Sigmoid colon (tissue), 7 donors: ENCODE measurements at regions of chr19 and their contacts with region 1.

Region 1: DNA sequence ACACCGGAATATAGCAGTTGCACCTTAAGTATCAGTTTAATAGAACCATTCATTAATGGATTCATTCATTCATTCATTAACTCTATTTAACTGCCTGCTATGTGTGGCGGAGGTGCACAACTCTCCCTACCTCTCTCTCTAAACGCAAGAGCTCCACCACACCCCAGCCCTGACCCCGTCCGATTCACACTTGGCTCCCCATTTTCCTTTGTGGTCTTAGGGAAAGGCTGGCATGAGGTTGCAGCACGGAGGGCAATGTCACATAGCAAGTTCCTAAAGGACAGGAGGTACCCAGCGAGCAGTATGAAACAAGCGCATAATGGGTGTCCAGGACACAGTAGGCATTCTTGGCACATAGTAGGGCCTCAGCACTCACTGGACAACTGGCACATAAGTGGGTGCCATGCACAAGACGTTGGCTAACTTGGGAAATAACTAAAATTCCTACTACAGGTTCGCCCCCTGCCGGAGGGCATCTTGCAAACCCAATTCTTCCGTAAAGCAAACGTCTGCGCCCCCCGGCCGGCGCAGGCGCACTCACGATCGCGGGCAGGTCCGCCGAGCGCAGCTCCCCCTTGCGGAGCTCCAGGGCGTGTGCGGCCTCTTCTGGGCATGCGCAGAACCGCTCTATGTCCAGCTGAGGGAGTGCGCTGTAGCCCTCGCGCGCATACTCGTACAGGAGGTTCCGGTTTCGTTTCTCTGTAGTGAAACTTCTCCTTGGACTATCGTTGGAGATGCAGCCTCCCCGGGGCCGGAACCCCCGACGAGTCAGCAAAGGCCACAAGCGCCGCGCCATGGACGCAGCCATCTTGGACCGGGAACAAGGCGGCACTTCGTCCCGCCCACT is at the start of gene SARS2:
- DNase-seq: peak; percentile 96
- H3K4me3 ChIP-seq: peak within 1 kb of the TSS; percentile 59 to 73 (median 64)
- H3K27ac ChIP-seq: peak within 1 kb of the TSS; percentile 84 to 91 (median 89)
- H3K4me1 ChIP-seq: peaks cover 0 to 27% (median 21%) of the 10 kb centered on the region in 4 donors
- H3K27me3 ChIP-seq: no peaks in the 10 kb centered on the region
- CTCF ChIP-seq: peak; percentile 95 to 98 (median 98)
- EP300 ChIP-seq: no peak
- POLR2A ChIP-seq: no peak
- total RNA-seq, gene SARS2: 7.4 to 32.7 (median 12.2) TPM

Region 2: DNA sequence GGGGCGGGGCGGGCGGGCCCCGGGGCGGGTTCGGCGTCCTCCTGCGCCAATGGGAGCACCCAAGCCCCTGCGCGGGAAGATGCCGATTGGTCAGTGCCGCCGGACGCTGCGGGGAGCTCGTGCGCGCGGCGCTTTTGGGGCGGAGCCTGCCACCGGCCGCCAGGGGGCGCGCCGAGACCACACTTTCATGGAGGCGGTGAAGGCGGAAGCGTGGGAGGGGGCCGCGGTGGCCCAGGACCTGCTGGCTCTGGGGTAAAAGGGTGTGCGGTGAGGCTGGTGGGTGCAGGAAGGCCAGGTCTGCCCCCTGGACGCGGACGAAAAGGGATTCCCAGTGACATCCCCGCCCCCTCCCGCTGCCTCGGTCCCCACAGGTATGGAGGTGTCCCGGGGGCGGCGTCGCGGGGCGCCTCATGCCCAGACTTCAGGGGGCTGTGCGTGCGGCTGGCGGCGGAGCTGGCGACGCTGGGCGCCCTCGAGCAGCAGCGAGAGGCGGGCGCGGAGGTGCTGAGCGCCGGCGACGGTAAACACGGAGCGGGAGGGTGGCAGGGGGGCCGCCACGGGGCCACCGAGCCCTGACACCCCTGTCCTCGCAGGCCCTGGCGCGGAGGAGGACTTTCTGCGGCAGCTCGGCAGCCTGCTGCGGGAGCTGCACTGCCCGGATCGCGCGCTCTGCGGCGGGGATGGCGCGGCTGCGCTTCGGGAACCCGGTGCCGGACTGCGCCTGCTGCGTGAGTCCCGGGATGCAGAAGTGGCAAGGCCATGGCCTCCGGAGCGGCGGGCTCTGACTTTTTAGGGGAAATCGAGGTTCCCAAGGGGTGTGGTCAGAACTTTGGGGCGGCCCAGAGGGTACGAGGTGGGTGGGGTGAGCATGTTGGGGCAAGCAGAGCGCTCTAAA is 526.9 kb before region 1 on chr19 and contains the start of gene FAM98C:
- intact Hi-C with region 1: loop called (anchors 1 kb)
- DNase-seq: peak; percentile 98
- H3K4me3 ChIP-seq: peak within 1 kb of the TSS; percentile 64 to 98 (median 76)
- H3K27ac ChIP-seq: peak within 1 kb of the TSS; percentile 79 to 88 (median 84)
- H3K4me1 ChIP-seq: peaks cover 0 to 15% (median 7%) of the 10 kb centered on the region in 4 donors
- H3K27me3 ChIP-seq: peaks cover 12 to 30% (median 28%) of the 10 kb centered on the region in 3 donors
- CTCF ChIP-seq: peak; percentile 92 to 96 (median 94)
- EP300 ChIP-seq: no peak
- POLR2A ChIP-seq: no peak
- total RNA-seq, gene FAM98C: 17.2 to 27.2 (median 18.6) TPM

Region 3: GRCh38 chr19:38514812-38515633 is 415.1 kb before region 1 on chr19:
- intact Hi-C with region 1: loop called (anchors 2 kb)
- DNase-seq: peak; percentile 73
- H3K4me3 ChIP-seq: no peak overlapping the region
- H3K27ac ChIP-seq: no peak overlapping the region
- H3K4me1 ChIP-seq: peaks cover 0 to 6% (median 0%) of the 10 kb centered on the region in 4 donors
- H3K27me3 ChIP-seq: no peaks in the 10 kb centered on the region
- CTCF ChIP-seq: peak in 3 of 4 experiments; percentile 47 to 87 (median 50)
- EP300 ChIP-seq: no peak
- POLR2A ChIP-seq: no peak

Region 4: DNA sequence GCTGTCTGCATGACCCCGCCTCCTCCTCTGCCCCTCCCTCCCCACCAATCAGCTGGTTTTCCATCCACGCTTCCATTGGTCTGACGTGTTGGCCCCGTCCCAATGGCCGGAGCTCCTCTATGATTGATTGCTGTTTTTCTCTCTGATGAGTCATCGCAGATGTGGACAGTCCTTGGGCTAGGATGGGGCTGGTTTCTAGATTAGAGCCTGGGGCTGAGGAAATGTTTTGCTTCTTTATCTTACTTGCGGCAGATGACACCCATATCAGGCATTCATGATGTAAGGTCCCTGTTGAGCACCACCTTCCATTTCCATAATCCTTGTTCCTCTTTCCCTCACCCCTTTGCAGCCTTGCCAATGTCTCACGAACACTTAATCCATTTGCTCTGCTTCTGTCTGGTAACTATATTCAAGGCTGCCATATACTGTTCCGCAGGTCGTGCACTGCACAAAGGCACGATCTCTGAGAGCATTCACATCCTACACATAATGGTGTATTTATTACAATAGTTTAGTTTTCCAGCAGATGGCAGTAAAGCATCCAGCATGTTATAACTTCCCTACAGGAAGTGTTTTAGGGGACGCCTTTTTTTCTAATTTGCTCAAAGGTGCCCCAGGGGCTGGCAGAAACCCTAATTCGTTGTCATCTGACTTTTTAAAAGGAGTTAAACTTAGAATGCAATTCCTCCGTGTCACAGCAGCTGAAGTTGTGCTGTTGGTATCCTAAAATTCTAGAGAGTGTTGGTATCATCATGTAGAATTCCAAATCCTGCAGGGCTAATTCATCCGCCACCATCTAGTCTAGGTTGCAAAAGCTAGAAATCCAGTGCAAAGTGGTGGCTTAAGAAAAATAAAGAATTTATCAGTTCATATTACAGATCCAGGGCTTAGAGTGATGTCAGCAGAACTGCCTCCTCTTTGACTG is 385.9 kb before region 1 on chr19:
- intact Hi-C with region 1: loop called (anchors 2 kb)
- DNase-seq: peak; percentile 76
- H3K4me3 ChIP-seq: peak overlapping the region in 1 of 4 donors; percentile 36
- H3K27ac ChIP-seq: peak overlapping the region in 1 of 4 donors; percentile 57
- H3K4me1 ChIP-seq: peaks cover 0 to 16% (median 7%) of the 10 kb centered on the region in 4 donors
- H3K27me3 ChIP-seq: no peaks in the 10 kb centered on the region
- CTCF ChIP-seq: peak in 3 of 4 experiments; percentile 18 to 52 (median 45)
- EP300 ChIP-seq: no peak
- POLR2A ChIP-seq: no peak

Region 5: DNA sequence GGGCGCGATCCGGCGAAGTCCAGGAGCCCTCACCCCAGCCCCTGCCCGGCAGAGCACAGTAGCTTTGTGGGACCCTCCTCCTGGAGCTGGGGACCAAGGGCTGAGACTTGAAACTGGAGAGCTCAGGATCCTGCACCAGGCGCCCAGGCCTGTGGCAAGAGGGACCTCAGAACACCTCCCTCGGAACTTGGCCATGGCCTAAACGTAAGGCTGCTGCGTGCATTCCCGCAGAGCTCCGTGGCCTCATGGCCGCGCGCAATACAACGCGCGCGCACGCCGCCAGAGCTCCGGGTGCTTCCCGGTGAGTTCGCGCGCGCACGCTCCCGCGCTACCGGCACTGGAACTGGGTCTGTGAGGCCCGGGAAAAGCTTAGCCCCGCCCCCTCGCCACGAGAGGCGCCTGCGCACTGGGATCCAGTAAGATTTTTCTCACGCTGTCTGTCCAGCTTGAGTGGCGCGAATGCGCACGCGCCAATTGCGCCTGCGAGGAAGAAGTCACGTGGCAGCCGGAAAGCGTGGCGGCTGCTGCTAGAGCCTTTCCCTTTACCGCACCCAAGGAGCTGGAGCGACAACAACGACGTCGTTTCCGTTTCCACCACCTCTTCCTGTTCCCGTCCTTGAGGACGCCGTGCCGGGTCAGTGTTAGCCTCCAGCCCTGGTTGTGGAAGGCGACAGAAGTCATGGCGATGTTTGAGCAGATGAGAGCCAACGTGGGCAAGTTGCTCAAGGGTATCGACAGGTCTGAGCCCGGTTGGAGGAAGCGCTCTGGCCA is 311.4 kb before region 1 on chr19 and contains the start of gene EIF3K:
- intact Hi-C with region 1: loop called (anchors 5 kb)
- DNase-seq: peak; percentile 99
- H3K4me3 ChIP-seq: peak within 1 kb of the TSS; percentile 81 to 98 (median 84)
- H3K27ac ChIP-seq: peak within 1 kb of the TSS; percentile 85 to 94 (median 89)
- H3K4me1 ChIP-seq: peaks cover 0 to 24% (median 19%) of the 10 kb centered on the region in 4 donors
- H3K27me3 ChIP-seq: no peaks in the 10 kb centered on the region
- CTCF ChIP-seq: no peak
- EP300 ChIP-seq: peak in 1 of 4 donors; percentile 89
- POLR2A ChIP-seq: peak; percentile 69 to 76
- total RNA-seq, gene EIF3K: 469 to 803 (median 546) TPM

Region 6: DNA sequence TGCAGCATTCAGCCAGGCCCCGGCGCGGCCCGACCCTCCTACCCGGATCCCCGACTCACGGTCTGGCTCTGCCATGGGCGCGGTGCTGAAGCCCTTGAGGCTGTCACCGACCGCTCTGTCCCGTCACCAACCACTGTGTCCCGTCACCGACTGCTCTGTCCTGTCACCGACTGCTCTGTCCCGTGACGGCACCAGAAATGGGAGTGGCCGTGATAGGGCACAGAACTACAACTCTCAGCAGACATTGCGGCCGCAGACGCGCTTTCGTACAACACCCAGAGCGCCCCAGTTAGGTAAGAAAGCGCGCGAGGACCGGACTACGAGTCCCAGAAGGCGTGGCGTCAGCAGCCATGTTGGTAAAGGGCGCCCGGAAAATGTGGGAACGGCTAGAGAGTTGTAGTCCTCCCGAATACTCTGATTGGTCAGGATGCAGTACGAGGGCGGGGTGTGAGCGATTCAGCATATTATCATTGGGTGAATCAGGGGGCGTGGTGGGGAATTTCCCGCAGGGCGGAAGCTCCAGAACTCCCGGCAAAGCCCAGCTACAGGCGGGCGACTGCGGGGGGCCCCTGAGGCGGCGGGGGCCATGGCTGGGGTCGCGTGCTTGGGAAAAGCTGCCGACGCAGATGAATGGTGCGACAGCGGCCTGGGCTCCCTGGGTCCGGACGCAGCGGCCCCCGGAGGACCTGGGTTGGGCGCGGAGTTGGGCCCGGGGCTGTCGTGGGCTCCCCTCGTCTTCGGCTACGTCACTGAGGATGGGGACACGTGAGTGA is 30.5 kb before region 1 on chr19 and contains the starts of genes NFKBIB and SIRT2:
- intact Hi-C with region 1: loop called (anchors 2 kb)
- DNase-seq: peak; percentile 100
- H3K4me3 ChIP-seq: peak within 1 kb of the TSS; percentile 58 to 90 (median 66)
- H3K27ac ChIP-seq: peak within 1 kb of the TSS; percentile 90 to 95 (median 92)
- H3K4me1 ChIP-seq: peaks cover 0 to 51% (median 37%) of the 10 kb centered on the region in 4 donors
- H3K27me3 ChIP-seq: no peaks in the 10 kb centered on the region
- CTCF ChIP-seq: no peak
- EP300 ChIP-seq: peak in 1 of 4 donors; percentile 63
- POLR2A ChIP-seq: peak; percentile 44 to 69
- total RNA-seq, gene NFKBIB: 13.8 to 20.2 (median 16.9) TPM
- total RNA-seq, gene SIRT2: 65.5 to 92.7 (median 85.2) TPM